ENCODE measurements at regions of chr17 and their contacts with region 1.

Region 1: GRCh38 chr17:48625495-48626244 is 488 bp downstream of the HOXB9 start:
- DNase-seq: peak in 2 of 3 donors; percentile 60 to 72
- H3K4me3 ChIP-seq: peak overlapping the region; percentile 15 to 73 (median 57)
- H3K27ac ChIP-seq: peak overlapping the region in 1 of 2 experiments; percentile 79
- H3K4me1 ChIP-seq: peaks cover 0 to 28% (median 24%) of the 10 kb centered on the region in 4 experiments
- H3K27me3 ChIP-seq: peaks cover 18 to 99% (median 64%) of the 10 kb centered on the region in 5 experiments

Region 2: GRCh38 chr17:47810205-47810821 is 815.4 kb before region 1 on chr17:
- CTCF ChIA-PET with region 1: no interaction called
- POLR2A ChIA-PET with region 1: no interaction called
- DNase-seq: peak in 2 of 3 donors; percentile 30 to 31
- H3K4me3 ChIP-seq: no peak overlapping the region
- H3K27ac ChIP-seq: no peak overlapping the region
- H3K4me1 ChIP-seq: no peaks in the 10 kb centered on the region
- H3K27me3 ChIP-seq: no peaks in the 10 kb centered on the region

Region 3: DNA sequence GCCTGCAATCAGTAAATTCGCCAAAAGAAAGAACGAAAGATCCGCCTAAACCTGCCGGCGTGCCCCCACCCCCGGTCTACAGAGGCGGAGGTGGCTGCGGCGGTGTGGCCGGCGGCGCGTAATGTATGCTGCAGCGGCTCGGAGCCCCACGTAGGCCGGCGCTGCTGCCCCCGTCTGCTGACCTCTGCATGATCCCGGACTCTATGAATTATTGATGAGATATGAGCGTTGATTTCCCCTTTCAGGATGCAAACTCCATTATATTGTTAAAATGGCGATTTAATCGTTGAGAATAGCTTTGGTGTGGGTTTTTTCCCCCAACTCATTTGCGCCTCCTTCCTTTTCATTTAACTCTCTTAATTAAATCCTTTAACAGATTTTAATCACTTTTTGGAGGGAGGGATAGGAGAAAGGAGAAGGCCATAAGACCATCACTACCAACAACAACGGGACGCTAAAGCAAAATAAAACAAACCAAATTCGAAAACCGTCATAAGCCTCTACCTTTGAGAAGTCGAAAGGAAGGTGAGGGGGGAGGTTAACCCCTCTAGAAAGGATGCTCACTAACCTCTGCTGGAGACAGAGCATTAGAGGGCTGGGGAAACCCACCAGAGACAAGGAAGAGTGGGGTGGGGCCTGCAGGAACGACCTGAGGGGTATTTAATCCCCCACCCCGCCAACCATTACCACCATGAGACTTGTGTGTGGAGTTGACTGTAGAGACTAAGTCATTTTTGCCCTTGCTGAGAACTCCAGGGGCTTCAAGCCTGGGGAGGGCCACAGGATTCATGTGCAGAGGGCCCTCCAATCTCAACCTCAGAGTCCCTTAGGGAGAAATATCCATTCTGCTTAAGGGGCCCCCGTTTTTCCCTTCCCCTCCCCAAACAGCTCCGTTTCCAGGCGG is 39.1 kb before region 1 on chr17:
- CTCF ChIA-PET with region 1: no interaction called
- POLR2A ChIA-PET with region 1: no interaction called
- DNase-seq: peak in 1 of 3 donors; percentile 40
- H3K4me3 ChIP-seq: peak overlapping the region; percentile 3 to 97 (median 82)
- H3K27ac ChIP-seq: peak overlapping the region; percentile 80 to 87
- H3K4me1 ChIP-seq: peaks cover 11 to 93% (median 72%) of the 10 kb centered on the region in 4 experiments
- H3K27me3 ChIP-seq: peaks cover 0 to 7% (median 0%) of the 10 kb centered on the region in 5 experiments

Region 4: GRCh38 chr17:48613862-48614694 is 11.6 kb before region 1 on chr17:
- CTCF ChIA-PET with region 1: interaction called, 11 read pairs
- POLR2A ChIA-PET with region 1: no interaction called
- DNase-seq: peak in 2 of 3 donors; percentile 62 to 67
- H3K4me3 ChIP-seq: peak overlapping the region in 5 of 7 experiments; percentile 6 to 63 (median 51)
- H3K27ac ChIP-seq: no peak overlapping the region
- H3K4me1 ChIP-seq: peaks cover 0 to 63% (median 57%) of the 10 kb centered on the region in 4 experiments
- H3K27me3 ChIP-seq: peaks cover 14 to 99% (median 57%) of the 10 kb centered on the region in 5 experiments

Region 5: DNA sequence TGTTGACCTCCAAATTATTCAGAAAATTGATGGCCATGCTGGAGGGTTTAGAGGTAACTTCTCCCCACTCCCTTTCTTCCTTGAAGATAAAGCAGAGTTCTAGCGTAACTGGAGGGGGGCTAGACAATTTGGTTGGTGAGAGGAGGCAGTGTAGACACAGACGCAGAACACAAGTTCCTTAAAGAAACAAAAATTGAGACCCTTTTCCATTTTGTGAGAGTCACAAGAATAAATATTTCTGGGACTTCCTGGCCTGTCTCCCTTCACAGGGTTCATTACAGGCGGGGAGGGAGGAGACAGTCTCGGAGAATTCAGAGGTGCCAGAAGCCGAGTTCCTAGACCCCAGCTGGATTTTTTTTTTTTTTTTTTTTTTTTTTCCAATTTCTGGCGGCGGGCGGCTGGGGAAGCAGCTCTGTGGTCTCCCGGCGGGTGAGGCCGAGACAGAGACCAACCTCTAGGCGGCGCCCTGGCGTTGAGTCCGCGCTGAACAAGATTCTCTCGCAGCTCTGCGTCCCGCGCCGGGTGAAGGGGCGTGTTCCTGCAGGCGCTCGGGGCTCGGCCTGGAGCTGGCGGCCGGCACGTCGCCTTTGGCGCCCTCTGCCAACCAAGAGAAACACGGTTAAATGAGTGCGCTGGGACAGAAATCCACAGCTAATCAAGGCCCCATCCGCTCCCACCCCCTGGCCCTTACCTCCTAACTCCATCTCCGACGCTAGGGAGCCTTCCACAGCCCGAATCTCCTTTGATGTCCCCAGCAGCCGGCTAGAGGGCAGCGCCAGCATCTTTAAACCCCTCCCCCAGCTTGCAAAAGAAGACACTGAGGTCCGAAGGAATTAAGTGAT is 10.7 kb after region 1 on chr17:
- CTCF ChIA-PET with region 1: interaction called, 27 read pairs
- POLR2A ChIA-PET with region 1: interaction called, 3 read pairs
- DNase-seq: peak; percentile 91 to 92 (median 91)
- H3K4me3 ChIP-seq: peak overlapping the region in 2 of 7 experiments; percentile 8 to 42
- H3K27ac ChIP-seq: no peak overlapping the region
- H3K4me1 ChIP-seq: peaks cover 0 to 14% (median 6%) of the 10 kb centered on the region in 4 experiments
- H3K27me3 ChIP-seq: peaks cover 6 to 97% (median 67%) of the 10 kb centered on the region in 5 experiments